Posterior vena cava (tissue), 2 donors: ENCODE measurements at regions of chr6 and their contacts with region 1.

Region 1: DNA sequence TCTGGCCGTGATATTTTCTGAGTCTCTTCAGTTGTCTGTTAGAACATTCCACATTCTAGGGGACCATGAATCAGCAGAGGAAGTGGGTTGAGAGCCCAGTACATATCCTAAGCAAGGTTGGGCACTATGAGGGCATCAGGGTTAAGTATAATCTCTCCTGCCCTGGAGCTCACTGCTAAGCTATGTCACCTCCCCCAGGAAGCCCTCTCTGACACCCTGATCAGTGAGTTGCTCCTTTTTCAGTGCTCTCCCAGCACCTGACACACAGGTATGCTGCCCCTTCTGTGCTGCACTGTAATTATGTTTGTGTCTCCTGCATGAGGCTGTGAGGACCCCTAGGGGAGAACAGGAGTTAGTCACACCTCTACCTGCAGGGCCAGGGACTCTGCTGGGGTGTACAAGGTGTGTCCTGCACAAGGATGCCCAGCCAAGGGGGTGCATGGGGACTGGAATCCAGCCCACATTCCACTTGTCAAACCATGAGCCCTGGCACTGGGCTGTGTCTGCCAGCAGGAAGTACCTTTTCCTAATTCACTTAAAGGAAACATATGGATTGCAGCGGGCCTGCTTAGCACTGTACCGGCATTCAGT is 3.9 kb downstream of the RAB44 start:
- DNase-seq: no peak

Region 2: DNA sequence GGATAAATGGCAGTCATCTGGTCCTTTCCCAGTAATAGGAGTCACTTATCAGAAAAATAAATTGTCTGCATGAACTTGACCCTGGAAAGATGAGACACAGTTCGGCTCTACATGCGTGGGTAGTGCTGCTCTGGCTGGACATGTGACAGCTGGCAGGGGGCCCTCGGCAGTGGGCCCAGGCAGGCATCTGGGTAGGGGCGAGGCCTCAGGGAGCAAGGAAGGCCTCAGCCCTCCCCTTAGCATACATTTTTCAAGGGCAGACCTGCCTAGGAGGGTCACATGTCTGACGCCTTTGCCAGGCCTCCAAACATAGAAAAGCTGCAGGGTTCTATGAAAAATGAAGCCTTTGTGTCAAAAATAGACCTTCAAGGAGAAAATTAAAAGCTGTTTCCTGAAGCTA is 1992.1 kb before region 1 on chr6:
- intact Hi-C with region 1: no loop called
- DNase-seq: peak; percentile 81

Region 3: DNA sequence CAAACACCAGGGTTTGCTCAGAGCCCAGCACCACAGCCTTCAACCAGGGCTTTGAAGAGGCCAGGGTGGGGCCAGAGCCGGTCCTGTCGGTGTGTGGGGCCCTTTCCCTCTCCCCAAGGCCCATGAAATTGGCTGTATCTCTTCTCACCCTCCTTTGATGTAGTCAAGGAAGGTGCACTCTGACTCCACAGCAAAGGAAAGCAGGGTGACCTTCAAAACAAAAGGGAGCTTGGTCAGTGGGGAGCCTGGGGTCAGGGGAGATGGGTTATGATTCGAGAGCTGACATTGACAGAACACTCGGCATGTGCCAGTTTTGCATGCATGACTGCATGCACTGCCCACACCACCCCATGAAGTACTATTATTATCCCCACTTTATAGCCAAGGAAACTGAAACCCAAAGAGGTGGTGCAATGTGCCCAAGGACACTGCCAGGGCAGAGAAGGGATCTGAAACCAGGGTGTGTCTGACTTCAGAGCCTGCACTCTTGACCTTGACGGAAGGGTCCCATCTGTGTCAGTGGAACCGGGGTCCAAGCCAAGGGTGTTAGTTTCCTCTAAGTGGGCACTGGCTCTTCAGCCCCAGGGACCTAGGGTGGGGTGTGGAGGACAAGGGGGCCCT is 51.5 kb after region 1 on chr6:
- intact Hi-C with region 1: loop called in 1 of 2 experiments (anchors 5 kb)
- DNase-seq: no peak